Activated CD8-positive, alpha-beta T cell treated with anti-CD3 and anti-CD28 coated beads, Interleukin-2, amount 10 ng/mL, durations not matched to agents 7 days and 5 days (primary cell): ENCODE measurements at regions of chr22 and their contacts with region 1.

Region 1: DNA sequence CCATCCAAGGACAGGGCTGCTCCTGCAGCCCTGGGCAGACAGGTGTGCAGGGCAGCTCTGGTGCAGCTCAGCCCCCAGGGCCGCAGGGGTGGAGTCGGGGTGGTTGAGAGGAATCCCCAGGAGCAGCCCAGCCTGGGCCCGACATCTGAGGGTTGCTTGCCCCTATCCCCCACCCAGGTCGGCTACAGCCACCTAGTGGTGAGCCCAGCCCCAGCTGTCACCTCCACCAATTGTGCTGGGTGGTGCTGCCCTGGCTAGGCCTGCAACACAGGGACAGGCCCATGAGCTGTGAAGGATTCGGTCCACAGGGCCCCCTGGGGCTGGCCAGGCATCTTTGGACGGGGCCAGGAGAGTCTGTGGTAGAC is 29.6 kb downstream of the RTN4R start:
- DNase-seq: peak; percentile 80
- ATAC-seq: peak; percentile 81
- H3K4me3 Mint-ChIP-seq: peak overlapping the region; percentile 62
- H3K27ac Mint-ChIP-seq: peak overlapping the region; percentile 90
- H3K4me1 Mint-ChIP-seq: peaks cover 36% of the 10 kb centered on the region
- H3K27me3 Mint-ChIP-seq: no peaks in the 10 kb centered on the region

Region 2: GRCh38 chr22:20156611-20157429 is 81.7 kb before region 1 on chr22:
- CTCF ChIA-PET with region 1: interaction called, 25 read pairs
- POLR2A ChIA-PET with region 1: no interaction called
- DNase-seq: peak; percentile 92
- ATAC-seq: peak; percentile 79
- H3K4me3 Mint-ChIP-seq: no peak overlapping the region
- H3K27ac Mint-ChIP-seq: no peak overlapping the region
- H3K4me1 Mint-ChIP-seq: peaks cover 7% of the 10 kb centered on the region
- H3K27me3 Mint-ChIP-seq: no peaks in the 10 kb centered on the region

Region 3: DNA sequence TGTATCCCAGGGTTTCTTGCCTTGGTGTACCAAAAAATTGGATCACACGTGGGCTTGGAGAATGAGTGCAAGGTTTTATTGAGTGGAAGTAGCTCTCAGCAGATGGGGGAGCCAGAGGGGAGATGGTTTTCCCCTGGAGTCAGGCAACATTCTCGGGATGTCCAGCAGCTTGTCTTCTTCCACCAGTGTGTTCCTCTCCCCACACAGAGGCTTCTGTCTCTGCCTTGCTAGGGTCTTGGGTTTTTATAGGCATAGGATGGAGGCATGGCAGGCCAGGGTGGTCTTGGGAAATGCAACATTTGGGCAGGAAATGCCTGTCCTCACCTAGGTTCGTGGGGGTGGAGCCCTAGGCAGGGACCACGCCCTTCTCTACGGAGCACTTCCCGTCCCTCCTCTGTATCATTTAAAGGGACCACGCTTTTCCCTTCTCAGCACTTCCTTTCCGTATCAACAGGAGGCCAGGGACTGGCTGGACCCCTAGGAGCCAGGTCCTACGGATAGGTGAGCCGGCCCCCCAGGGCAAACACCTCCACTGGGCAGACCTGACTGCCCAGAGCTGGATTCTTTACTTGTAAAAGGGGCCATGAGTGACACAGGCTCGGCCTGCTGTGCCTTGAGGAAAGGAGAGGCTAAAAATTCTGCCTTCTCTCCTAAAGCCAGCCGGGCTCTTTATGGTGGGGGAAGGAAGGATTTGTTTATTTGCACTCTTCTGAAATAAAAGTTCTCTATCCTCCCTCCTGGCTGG is 32.4 kb before region 1 on chr22:
- CTCF ChIA-PET with region 1: interaction called, 16 read pairs
- POLR2A ChIA-PET with region 1: interaction called, 4 read pairs
- DNase-seq: peak; percentile 84
- ATAC-seq: peak; percentile 93
- H3K4me3 Mint-ChIP-seq: peak overlapping the region; percentile 92
- H3K27ac Mint-ChIP-seq: peak overlapping the region; percentile 93
- H3K4me1 Mint-ChIP-seq: peaks cover 20% of the 10 kb centered on the region
- H3K27me3 Mint-ChIP-seq: no peaks in the 10 kb centered on the region

Region 4: DNA sequence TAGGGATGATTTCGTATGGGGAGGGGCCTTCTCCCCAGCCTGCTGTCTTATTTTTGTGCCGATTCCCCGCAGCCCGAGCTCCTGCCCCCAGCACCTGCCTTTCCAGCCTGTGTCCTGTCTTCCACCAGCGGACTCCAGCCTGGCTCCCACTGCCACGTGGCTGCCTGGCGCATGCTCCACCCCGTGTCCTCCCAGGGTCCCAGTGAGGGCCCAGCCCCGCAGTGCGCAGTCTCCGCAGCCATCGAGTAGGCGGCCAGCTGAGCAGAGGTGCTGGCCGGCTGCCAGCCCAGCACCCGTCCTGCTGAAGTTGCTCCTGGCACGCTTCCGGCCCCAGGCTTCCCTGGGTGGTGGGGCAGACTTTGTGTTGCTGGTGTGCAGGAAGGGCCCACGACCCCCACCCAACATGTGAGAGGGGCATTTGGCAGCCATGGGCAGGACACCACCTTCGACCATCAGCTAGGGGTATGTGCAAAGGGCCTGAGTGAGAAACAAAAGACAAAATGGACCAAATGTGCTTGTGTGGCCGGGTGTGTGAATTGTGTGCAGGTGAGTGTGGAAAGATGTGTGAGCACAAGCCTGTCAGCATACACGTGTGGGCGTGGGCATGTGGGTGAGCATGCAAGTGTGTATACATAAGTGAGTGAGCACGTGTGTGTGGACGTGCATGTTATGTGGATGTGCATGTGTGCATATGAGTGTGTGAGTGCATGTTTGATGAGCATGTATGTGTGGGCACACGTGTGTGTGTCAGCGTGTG is 26.3 kb before region 1 on chr22:
- CTCF ChIA-PET with region 1: interaction called, 16 read pairs
- POLR2A ChIA-PET with region 1: interaction called, 4 read pairs
- DNase-seq: no peak
- ATAC-seq: no peak
- H3K4me3 Mint-ChIP-seq: no peak overlapping the region
- H3K27ac Mint-ChIP-seq: no peak overlapping the region
- H3K4me1 Mint-ChIP-seq: peaks cover 7% of the 10 kb centered on the region
- H3K27me3 Mint-ChIP-seq: no peaks in the 10 kb centered on the region